PC-9 (cell line): ENCODE measurements at regions of chr9 and their contacts with region 1.

Region 1: DNA sequence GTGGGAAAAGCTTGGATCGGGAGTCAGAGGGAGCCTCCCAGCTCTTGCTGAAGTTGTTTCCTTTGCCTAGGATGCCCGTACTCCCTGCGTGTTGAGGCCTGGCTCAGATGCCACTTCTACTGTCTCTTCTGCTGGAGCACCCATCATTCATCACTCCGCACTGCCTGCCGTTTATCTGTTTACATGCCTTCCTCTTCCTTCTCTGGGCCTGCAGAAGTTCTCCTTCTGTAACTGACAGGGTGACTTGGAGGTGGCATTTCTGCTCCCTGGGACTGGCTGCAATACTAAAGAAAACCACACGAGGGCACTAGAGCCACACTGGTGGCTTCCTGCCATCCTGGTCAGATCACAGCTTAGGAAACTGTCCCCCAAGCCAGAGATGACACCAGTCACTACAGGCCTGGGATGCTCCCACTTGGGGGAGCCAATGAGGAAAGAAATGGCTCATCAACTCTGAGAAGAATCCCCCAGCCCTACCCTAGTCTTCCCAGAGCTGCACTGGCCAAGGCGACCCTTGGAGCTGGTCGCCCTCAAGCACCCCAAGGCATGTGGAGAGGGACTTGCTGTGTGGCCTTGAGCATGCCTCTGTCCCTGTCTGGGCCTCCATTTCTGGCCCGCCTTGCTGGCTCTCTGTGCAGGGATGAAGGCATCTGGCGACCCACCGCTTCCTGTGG is 9.7 kb upstream of the SLC25A51 start:
- DNase-seq: peak; percentile 50 to 77
- H3K4me3 ChIP-seq: no peak overlapping the region
- H3K27ac ChIP-seq: no peak overlapping the region
- H3K4me1 ChIP-seq: peaks cover 13% of the 10 kb centered on the region
- H3K27me3 ChIP-seq: no peaks in the 10 kb centered on the region
- CTCF ChIP-seq: peak; percentile 90

Region 2: GRCh38 chr9:37953775-37954437 is 40.3 kb after region 1 on chr9:
- CTCF ChIA-PET with region 1: interaction called, 3 read pairs
- POLR2A ChIA-PET with region 1: no interaction called
- intact Hi-C with region 1: loop called (anchors 5 kb)
- DNase-seq: peak; percentile 70 to 95
- H3K4me3 ChIP-seq: no peak overlapping the region
- H3K27ac ChIP-seq: peak overlapping the region; percentile 76
- H3K4me1 ChIP-seq: peaks cover 29% of the 10 kb centered on the region
- H3K27me3 ChIP-seq: no peaks in the 10 kb centered on the region
- CTCF ChIP-seq: no peak

Region 3: DNA sequence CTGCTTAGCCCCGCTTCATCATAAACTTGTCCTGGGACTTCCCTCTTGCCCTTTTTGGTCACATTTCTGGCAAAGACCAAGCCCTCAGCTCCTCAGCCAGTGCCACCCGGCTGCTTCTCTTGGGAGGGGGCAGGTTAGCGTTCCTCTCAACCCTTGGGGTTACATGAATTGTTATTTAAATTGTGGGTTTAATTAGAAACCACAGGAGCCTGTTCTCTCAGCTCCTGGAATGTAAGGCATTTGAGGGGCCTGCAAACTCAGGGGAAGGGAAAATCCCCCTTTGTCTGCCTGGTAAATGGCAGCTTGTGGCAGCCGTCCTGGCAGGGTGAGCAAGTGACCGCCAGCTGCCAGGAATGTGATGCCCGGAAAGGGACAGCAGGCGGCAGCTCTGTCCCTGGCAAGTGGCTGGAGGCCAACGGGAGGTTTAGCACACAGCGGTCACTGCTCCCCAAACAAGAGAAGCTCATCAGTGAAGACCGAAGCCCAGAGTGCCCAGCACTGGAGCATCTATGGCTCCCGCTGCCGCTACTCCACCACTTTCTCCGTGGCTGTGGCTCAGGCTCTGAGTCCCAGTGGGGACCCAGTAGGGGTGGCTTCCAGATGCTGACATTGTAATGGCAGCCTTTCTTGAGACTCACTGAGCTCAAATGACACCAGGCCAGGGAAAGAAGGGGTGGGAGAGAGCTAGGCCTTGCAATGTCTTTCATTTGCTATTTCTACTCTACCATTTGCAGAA is 103.7 kb after region 1 on chr9:
- CTCF ChIA-PET with region 1: interaction called, 5 read pairs
- POLR2A ChIA-PET with region 1: no interaction called
- intact Hi-C with region 1: loop called (anchors 1 kb)
- DNase-seq: peak; percentile 51 to 80
- H3K4me3 ChIP-seq: no peak overlapping the region
- H3K27ac ChIP-seq: peak overlapping the region; percentile 85
- H3K4me1 ChIP-seq: peaks cover 64% of the 10 kb centered on the region
- H3K27me3 ChIP-seq: no peaks in the 10 kb centered on the region
- CTCF ChIP-seq: peak; percentile 39

Region 4: DNA sequence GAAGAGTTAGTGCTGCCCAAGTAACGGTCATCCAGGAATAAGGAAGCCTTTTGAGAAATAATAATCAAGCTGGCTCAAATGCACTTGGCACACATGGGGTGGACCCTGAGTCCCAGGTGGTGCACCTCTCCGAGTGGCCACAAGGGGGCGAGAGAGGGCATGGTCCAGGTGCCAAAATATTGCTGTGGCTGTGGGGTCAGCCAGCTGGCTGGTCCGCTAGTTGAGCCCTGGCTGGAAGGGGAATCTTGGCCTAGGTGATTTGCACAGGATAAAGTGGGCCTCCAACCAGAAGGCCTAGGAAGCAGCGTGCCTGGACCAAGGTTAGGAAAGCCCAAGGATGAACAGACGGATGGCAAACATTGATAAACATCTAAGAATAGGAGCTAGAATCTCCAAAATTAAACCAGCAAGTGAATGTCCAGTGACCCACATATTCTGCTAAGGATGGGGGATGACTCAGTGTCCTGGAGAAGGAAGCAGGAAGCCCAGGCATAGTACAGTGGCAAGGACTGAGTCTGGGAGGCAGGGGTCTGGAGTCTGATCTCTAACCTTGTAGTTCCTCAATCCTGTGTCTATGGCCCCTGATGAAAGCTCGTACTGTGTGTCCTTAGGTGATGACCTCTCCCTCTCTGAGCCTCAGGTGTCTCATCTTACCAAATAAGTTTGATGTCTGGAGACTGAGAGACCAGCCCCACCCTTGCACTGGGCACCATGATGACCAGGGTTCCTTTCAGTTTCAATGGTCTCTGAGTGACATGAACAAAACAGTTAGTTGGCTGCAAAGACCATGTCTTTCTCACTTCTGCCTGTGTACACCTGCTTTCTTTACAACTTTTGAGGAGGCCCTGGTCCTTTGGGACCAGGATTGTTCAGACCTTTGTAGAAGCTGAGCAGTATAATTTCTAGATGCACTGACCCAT is 174.6 kb after region 1 on chr9:
- CTCF ChIA-PET with region 1: interaction called, 3 read pairs
- POLR2A ChIA-PET with region 1: no interaction called
- intact Hi-C with region 1: loop called (anchors 1 kb)
- DNase-seq: peak in 1 of 2 experiments; percentile 49
- H3K4me3 ChIP-seq: no peak overlapping the region
- H3K27ac ChIP-seq: no peak overlapping the region
- H3K4me1 ChIP-seq: peaks cover 22% of the 10 kb centered on the region
- H3K27me3 ChIP-seq: no peaks in the 10 kb centered on the region
- CTCF ChIP-seq: peak; percentile 93

Region 5: DNA sequence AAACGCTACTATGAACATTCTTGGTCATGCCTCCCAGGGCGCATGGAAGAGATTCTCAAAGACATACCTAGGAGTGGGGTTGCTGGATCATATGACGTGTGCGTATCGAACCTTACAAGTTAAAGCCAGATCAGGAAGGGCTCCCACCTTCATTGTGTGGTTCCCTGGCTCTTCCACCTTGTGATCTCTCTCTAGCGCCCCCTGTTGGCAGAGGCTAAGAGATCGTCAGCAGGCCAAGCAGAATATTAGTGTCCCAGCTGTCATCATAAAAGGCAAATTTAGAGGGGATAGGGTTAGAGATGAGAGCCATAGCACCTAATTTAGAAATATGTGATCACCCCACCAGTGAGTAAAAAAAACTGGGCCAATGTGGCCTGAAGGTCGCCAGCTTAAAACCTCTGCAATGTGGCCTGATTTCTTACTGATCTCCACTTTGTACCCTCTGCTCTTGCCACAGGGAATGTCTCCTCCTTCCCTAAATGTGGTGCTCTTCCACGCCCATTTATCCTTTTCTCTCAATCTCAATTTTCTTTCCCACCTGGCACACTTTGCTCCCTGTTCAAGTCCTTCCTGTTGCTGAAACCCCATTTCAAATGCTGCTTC is 247.1 kb after region 1 on chr9:
- CTCF ChIA-PET with region 1: interaction called, 5 read pairs
- POLR2A ChIA-PET with region 1: no interaction called
- intact Hi-C with region 1: loop called (anchors 5 kb)
- DNase-seq: peak in 1 of 2 experiments; percentile 37
- H3K4me3 ChIP-seq: no peak overlapping the region
- H3K27ac ChIP-seq: no peak overlapping the region
- H3K4me1 ChIP-seq: no peaks in the 10 kb centered on the region
- H3K27me3 ChIP-seq: no peaks in the 10 kb centered on the region
- CTCF ChIP-seq: peak; percentile 81

Region 6: DNA sequence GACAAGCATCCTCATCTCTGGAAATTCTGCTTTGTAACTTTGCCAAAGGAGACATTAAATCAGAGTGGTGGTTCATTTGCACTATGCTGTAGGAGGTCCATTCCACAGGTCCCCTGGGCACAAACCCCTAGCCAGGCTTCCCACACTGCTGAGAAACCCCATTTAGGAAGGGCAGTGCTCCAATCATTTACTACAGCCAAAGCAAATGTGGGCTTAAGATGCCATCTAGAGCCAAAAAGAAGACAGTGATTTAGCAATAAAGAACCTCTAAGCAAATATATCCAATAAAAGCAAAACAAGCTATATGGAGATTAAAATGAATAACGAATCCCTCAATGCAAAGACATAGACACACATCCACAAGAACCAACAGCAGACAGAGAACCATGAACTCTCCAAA is 349.9 kb after region 1 on chr9:
- CTCF ChIA-PET with region 1: interaction called, 6 read pairs
- POLR2A ChIA-PET with region 1: no interaction called
- intact Hi-C with region 1: loop called (anchors 2 kb)
- DNase-seq: peak in 1 of 2 experiments; percentile 37
- H3K4me3 ChIP-seq: no peak overlapping the region
- H3K27ac ChIP-seq: no peak overlapping the region
- H3K4me1 ChIP-seq: no peaks in the 10 kb centered on the region; the same call in 1 of the 2 replicates
- H3K27me3 ChIP-seq: no peaks in the 10 kb centered on the region
- CTCF ChIP-seq: peak; percentile 59